ENCODE measurements at regions of chr1 and their contacts with region 1.

Region 1: DNA sequence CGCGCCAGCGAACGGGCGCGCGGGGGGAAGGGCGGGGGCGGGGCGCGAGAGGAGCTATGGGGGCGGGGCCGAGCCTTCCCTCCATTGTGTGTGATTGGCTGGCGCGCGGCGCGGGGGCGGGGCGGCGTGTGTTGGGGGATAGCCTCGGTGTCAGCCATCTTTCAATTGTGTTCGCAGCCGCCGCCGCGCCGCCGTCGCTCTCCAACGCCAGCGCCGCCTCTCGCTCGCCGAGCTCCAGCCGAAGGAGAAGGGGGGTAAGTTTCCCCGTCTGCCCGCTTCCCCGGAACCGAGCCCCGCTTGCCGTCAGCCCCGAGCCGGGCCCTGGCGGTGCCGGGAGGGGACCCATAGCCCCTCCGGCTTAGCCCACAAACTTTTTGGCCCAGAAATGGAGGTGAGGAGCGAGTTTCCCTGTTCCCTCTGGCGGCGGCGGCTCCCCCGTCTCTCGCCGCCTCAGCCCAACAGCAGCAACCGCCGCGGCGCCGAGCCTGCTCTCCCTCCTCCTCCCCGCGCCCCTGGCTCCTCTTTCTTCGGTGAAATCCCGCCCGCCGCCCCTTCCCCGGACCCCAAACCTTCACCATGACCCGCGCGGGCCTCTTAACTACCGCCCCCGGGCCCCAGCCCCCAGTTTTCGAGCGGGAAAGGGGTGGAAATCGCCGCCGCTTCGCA is at the start of gene H3-3A:
- DNase-seq: peak; percentile 99 to 100
- ATAC-seq: peak; percentile 96
- H3K4me3 ChIP-seq: peak within 1 kb of the TSS; percentile 91 to 97
- H3K27ac ChIP-seq: peak within 1 kb of the TSS; percentile 44 to 94
- H3K4me1 ChIP-seq: peaks cover 0 to 5% of the 10 kb centered on the region in 2 donors
- H3K27me3 ChIP-seq: no peaks in the 10 kb centered on the region
- total RNA-seq, gene H3-3A: 310 to 349 TPM

Region 2: GRCh38 chr1:225999227-225999911 is 63.3 kb before region 1 on chr1 and contains the start of gene SDE2:
- intact Hi-C with region 1: loop called in 1 of 2 experiments (anchors 1 kb)
- DNase-seq: peak; percentile 100
- ATAC-seq: peak; percentile 99
- H3K4me3 ChIP-seq: peak within 1 kb of the TSS; percentile 79 to 87
- H3K27ac ChIP-seq: peak within 1 kb of the TSS; percentile 85 to 100
- H3K4me1 ChIP-seq: no peaks in the 10 kb centered on the region
- H3K27me3 ChIP-seq: no peaks in the 10 kb centered on the region
- total RNA-seq, gene SDE2: 15.7 to 18.3 TPM

Region 3: DNA sequence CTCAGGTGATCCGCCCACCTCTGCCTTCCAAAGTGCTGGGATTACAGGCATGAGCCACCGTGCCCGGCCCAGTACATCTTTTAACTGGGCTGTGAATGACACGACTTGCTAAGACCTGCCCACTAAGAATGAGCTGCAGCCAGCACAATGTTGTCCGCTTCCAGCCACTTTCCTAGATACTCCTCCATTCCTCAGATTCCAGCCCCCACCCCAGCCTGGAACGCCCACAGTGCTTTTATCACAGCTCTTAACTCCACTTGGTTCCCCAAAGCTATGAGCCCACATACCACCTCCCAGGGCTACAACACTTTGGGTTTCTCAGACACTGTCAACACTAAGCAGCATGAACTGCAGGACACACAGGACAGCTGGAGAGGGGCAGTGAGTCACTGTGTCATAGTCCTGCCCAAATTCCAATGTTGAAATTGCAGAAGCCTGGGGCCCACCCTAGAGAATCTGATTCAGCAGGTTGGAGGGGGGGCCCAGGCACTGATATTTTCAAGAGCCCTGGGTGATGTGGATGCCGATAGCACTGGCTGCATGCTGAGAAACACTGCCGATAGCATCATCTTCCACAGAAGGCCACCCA is 65.9 kb after region 1 on chr1:
- intact Hi-C with region 1: no loop called
- DNase-seq: peak in 1 of 2 donors; percentile 63
- ATAC-seq: no peak
- H3K4me3 ChIP-seq: no peak overlapping the region
- H3K27ac ChIP-seq: no peak overlapping the region
- H3K4me1 ChIP-seq: no peaks in the 10 kb centered on the region
- H3K27me3 ChIP-seq: no peaks in the 10 kb centered on the region

Region 4: DNA sequence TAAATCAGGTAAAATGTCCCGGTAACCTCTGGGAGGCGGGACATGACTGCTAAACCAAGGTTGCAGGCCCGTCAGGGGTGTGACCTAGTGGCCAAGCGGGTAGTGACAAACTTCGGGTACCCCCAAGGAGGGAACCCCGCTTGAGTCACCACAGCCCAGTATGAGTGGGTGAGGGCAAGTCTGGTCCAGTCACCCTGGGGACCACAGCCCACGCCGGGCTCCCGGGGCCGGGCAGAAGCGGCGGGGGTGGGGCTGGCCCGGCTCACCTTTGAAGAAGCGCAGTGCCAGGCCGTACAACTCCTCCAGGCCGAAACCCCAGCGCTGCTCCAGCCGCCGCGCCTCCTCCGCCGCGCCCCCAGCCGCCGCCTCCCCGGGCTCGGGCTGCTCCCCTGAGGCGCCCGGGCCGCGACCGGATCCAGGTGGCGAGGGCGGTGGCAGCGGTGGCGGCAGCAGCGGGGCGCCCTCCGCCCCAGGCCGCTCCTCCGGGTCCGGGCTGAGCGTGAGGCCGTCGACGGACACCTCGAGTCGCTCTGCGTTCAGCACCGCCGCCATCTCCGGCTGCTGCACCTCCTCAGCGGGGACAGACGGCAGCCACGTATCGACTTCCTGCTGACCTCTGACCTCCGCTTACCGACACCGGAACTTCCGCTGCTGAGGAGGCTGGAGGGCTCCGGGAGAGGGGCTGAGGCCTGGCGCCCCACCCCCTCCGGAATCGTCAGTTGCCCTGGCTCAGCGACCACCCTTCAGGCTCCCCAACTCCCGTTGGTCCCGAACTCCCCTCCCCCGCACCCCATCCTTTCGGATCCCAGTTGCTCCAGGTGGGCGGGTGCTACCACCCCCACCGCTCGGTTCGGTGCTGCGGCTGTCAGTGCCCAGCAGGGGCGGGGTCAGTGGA is 123.7 kb after region 1 on chr1 and contains the start of gene ACBD3:
- intact Hi-C with region 1: loop called in 1 of 2 experiments (anchors 10 kb)
- DNase-seq: peak; percentile 94 to 95
- ATAC-seq: peak; percentile 94
- H3K4me3 ChIP-seq: peak within 1 kb of the TSS; percentile 84 to 90
- H3K27ac ChIP-seq: peak within 1 kb of the TSS; percentile 34 to 81
- H3K4me1 ChIP-seq: peaks cover 0 to 3% of the 10 kb centered on the region in 2 donors
- H3K27me3 ChIP-seq: no peaks in the 10 kb centered on the region
- total RNA-seq, gene ACBD3: 41.6 to 45.5 TPM

Region 5: DNA sequence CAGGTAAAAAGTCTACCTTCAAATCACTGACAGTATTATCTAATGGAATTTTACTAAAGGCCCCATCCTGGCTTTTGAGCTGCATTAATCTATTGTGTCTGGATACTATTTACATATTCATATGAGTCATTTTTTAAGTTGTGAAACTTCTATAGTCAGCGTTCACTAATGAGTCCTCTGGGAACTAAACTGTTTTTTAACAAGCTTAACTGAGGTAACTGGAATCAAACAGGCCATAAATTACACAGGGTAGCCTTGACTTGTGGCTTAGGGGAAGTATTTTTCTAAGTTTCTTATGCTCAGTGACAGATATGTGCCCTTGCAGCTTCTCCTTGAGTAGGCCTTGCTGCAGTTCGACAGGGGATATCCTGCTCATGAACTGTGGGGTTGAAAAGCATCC is 1603.6 kb after region 1 on chr1:
- intact Hi-C with region 1: no loop called
- DNase-seq: no peak
- ATAC-seq: no peak
- H3K4me3 ChIP-seq: no peak overlapping the region
- H3K27ac ChIP-seq: no peak overlapping the region
- H3K4me1 ChIP-seq: no peaks in the 10 kb centered on the region
- H3K27me3 ChIP-seq: no peaks in the 10 kb centered on the region

Measured in aorta (tissue), 5 donors.